Left colon (tissue), 2 donors: ENCODE measurements at regions of chr2 and their contacts with region 1.

Region 1: DNA sequence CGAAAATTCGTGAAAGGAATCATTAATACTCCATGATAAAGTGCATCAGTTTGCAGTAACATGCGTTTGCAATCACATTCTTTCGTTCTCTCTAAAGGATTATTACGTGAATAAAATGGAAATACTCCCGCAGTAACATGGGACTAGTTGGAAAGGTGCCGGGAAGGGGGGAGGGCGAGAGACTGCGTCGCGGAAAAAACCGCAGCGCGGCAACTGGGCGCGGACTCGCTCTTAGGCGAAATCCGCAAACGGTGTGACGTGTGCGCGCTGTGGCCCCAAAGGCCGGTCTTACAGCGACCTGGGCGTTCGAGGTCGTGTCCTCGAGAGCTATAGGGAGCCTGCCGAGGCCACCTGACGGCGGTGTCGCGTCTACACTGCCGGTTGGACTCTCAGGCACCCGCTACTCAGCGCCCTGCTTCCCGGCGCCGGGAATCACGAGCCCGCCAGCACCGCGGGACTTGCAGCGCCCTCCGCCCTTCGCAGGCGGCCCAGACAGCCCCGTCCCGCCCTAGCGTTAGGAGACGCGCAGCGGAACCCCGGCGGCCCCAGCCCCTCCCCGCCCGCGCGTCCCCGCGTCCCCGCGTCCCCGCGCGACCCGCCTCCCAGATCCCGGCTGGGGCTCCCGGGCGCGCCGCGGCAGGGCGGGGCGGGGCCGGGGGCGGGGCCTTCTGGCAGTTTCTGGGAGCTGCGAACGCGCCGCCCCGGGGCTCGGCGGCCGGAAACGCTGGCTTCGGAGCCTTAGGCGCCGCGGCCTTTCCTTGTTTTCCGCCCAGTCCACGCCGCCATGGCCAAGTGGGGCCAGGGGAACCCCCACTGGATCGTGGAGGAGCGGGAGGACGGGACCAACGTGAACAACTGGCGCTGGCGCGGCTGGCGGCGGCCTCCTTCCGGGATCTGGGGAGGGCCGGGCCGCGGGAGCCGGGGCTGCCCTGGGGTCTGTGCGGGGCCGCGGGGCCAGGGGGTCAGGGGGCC is 15.1 kb downstream of the C2orf74 start:
- DNase-seq: peak; percentile 93 to 96
- ATAC-seq: peak; percentile 91

Region 2: DNA sequence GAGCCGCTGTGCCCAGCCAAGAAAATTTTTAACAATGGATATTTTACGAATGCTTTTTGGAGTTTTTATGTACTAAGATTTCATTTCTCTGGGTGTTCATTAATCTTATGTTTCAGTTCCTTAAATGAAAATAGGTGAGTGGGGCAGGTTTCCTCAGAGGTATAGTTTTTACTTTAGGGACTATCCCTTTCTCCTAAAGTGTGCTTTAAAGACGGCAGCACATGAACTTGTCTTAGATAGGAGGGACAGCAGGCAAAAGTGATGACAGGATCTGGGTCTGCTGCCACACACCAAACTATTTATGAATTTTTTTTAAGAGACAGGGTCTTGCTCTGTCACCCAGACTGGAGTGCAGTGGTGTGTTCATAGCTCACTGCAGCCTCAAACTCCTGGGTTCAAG is 303.7 kb before region 1 on chr2:
- intact Hi-C with region 1: loop called in 1 of 2 experiments (anchors 10 kb)
- DNase-seq: no peak
- ATAC-seq: no peak